Posterior cingulate gyrus (tissue), 11 donors: ENCODE measurements at regions of chr5 and their contacts with region 1.

Region 1: GRCh38 chr5:142881076-142881783 is 111.1 kb downstream of the ARHGAP26 start:
- DNase-seq: no peak

Region 2: GRCh38 chr5:142748568-142749249 is 132.5 kb before region 1 on chr5:
- intact Hi-C with region 1: loop called (anchors 1 kb)
- DNase-seq: peak in 4 of 10 donors; percentile 12 to 88 (median 48)

Region 3: DNA sequence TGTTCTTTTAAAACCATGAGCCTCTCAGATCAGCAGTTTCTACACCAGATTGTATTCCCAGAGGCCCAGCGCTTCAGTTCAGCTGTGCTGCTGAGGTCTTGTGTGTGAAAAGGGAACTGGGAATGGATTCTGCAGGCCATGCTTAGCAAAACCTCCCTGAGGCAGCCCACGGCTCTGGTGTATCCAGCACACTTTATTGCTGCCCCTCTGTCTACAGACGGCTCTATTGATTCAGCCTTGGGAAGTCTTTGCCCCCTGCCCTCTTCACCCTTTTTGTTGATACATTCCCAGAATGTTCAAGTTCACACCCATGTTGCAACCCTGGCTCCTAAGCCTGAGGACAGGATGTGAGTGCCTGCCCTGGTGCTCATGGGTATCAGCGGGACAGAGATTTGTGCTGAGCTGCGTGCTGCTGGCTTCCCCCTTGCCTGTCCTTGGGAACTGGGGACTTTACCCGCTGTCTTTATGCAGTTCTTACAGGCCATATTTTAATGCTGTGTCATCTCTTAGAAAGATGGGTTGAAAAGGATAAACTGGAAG is 73.8 kb before region 1 on chr5:
- intact Hi-C with region 1: no loop called
- DNase-seq: no peak